CD8-positive, alpha-beta T cell (primary cell): ENCODE measurements at regions of chr17 and their contacts with region 1.

Region 1: DNA sequence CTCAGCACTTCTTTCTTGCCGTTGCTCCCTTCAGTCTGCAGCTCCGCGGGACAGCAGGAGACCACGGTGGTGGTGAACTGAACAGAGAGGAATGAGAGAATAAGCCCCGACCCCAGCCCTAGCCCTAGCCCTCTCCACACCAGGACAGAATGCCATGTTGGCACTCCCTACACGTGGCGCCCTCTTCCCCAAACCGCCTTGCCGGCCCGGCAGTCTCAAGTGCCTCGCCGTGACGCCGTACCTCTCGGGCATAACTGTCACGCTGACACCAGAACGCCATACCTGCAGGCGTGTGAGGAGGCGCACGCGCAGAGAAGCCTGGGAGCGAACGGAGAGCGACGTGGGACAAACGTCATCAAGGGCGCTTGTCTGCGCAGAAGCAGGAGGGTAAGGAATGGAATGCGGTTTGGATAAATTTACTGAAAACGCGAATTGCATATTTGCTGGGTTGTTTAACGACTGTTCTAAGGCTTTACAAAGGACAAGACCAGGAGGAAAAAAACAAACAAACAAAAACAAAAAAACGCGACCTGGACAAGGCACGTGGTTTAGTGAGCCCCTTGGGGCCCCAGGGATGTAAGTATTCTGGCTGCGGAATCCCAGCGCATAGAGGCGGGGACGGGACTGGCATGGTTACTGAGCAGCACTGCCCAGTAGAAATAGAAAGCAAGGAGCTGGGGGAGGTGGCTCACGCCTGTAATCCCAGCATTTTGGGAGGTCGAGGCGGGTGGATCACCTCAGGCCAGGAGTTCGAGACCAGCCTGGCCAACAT is at the start of gene AARSD1:
- DNase-seq: peak; percentile 80 to 96 (median 88)
- ATAC-seq: peak; percentile 99
- H3K4me3 ChIP-seq: peak within 1 kb of the TSS; percentile 48 to 86
- H3K4me3 Mint-ChIP-seq: peak within 1 kb of the TSS; percentile 87
- H3K27ac ChIP-seq: peak within 1 kb of the TSS; percentile 63 to 82
- H3K27ac Mint-ChIP-seq: peak within 1 kb of the TSS; percentile 84
- H3K4me1 ChIP-seq: peaks cover 7% of the 10 kb centered on the region
- H3K4me1 Mint-ChIP-seq: peaks cover 19% of the 10 kb centered on the region
- H3K27me3 ChIP-seq: no peaks in the 10 kb centered on the region
- H3K27me3 Mint-ChIP-seq: no peaks in the 10 kb centered on the region
- CTCF ChIP-seq: no peak
- total RNA-seq, gene AARSD1: 75.1 to 87.6 TPM

Region 2: GRCh38 chr17:42832974-42833766 is 131.2 kb before region 1 on chr17 and contains the start of gene PSME3:
- CTCF ChIA-PET with region 1: no interaction called
- POLR2A ChIA-PET with region 1: interaction called, 6 read pairs
- intact Hi-C with region 1: loop called in 1 of 2 experiments (anchors 5 kb)
- DNase-seq: peak; percentile 75 to 95 (median 88)
- ATAC-seq: peak; percentile 87
- H3K4me3 ChIP-seq: peak within 1 kb of the TSS; percentile 93 to 100
- H3K4me3 Mint-ChIP-seq: peak within 1 kb of the TSS; percentile 97
- H3K27ac ChIP-seq: peak within 1 kb of the TSS; percentile 95
- H3K27ac Mint-ChIP-seq: peak within 1 kb of the TSS; percentile 99
- H3K4me1 ChIP-seq: peaks cover 17% of the 10 kb centered on the region
- H3K4me1 Mint-ChIP-seq: peaks cover 31% of the 10 kb centered on the region
- H3K27me3 ChIP-seq: no peaks in the 10 kb centered on the region
- H3K27me3 Mint-ChIP-seq: no peaks in the 10 kb centered on the region
- CTCF ChIP-seq: no peak
- total RNA-seq, gene PSME3: 74.1 to 74.2 TPM

Region 3: DNA sequence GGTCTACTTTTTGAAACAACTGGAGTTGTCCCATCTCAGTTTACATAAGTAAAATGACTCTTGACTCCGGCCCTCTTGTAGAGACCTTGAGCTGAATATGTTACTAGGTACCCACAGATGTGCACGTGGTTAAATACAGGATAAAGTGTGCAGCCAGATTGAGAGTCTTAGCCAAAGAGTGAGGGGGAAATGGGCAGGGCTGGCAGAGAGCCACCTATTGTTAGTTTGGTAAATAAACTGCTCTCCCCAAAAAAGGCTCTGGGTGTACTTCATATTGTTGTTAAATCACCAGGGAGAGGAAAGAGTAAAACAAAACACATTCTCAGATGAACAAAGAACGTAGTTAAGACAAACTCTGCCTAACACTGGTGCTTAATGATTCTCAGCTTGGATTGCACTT is 43.4 kb before region 1 on chr17:
- CTCF ChIA-PET with region 1: no interaction called
- POLR2A ChIA-PET with region 1: no interaction called
- intact Hi-C with region 1: no loop called
- DNase-seq: no peak
- ATAC-seq: no peak
- H3K4me3 ChIP-seq: no peak overlapping the region
- H3K4me3 Mint-ChIP-seq: no peak overlapping the region
- H3K27ac ChIP-seq: no peak overlapping the region
- H3K27ac Mint-ChIP-seq: no peak overlapping the region
- H3K4me1 ChIP-seq: no peaks in the 10 kb centered on the region
- H3K4me1 Mint-ChIP-seq: peaks cover 2% of the 10 kb centered on the region
- H3K27me3 ChIP-seq: no peaks in the 10 kb centered on the region
- H3K27me3 Mint-ChIP-seq: peaks cover 3% of the 10 kb centered on the region
- CTCF ChIP-seq: no peak

Region 4: DNA sequence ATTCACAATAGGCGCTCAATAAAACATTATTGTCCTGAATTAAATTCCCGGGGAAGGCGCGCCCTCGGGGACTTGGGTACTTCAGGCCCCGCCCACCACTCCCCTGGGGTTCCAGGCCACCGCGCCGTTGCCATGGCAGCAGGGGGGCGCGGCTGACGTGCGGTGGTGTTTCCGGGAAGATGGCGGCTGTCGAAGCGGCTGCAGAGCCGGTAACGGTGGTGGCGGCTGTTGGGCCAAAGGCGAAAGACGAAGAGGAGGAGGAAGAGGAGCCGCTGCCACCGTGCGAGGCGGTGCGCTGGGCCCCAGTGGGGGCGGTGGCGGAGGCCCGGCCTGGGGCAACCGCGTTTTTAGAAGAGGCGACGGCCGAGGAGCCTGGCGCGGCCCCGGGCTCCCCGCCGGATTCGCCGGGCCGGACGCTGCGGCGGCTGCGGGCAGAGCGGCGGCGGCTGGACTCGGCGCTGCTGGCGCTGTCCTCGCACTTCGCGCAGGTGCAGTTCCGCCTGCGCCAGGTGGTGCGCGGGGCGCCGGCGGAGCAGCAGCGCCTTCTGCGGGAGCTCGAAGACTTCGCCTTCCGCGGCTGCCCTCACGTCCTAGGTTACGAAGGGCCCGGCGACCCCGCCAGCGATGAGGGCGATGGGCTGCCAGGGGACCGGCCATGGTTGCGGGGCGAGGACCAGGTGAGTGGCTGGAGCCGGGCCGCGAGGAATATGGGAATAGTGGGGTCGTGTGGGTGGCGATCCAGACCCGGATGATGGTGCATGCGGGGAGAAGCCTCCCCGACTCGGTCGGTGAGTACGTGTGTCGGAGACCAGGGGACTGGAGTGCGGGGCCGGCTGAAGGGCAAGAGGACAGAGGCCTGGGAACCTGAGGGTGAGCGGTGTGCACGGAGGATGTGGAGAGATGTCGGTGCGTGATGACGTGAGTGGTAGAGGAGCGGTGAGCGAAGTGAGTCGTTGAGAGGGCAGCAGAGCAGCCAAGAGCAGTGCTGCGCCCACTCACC is 16.4 kb after region 1 on chr17 and contains the start of gene RUNDC1:
- CTCF ChIA-PET with region 1: no interaction called
- POLR2A ChIA-PET with region 1: no interaction called
- intact Hi-C with region 1: loop called (anchors 2 kb)
- DNase-seq: peak; percentile 77 to 95 (median 91)
- ATAC-seq: peak; percentile 86
- H3K4me3 ChIP-seq: peak within 1 kb of the TSS; percentile 66 to 80
- H3K4me3 Mint-ChIP-seq: peak within 1 kb of the TSS; percentile 97
- H3K27ac ChIP-seq: peak within 1 kb of the TSS; percentile 65 to 67
- H3K27ac Mint-ChIP-seq: peak within 1 kb of the TSS; percentile 97
- H3K4me1 ChIP-seq: peaks cover 20% of the 10 kb centered on the region
- H3K4me1 Mint-ChIP-seq: peaks cover 41% of the 10 kb centered on the region
- H3K27me3 ChIP-seq: no peaks in the 10 kb centered on the region
- H3K27me3 Mint-ChIP-seq: no peaks in the 10 kb centered on the region
- CTCF ChIP-seq: peak; percentile 50
- total RNA-seq, gene RUNDC1: 19.2 to 19.4 TPM